T-cell (primary cell): ENCODE measurements at regions of chr14 and their contacts with region 1.

Region 1: GRCh38 chr14:91164685-91165084 is 50.8 kb downstream of the DGLUCY start:
- DNase-seq: no peak
- ATAC-seq: no peak
- H3K4me3 ChIP-seq: no peak overlapping the region
- H3K4me3 Mint-ChIP-seq: no peak overlapping the region
- H3K27ac ChIP-seq: no peak overlapping the region
- H3K27ac Mint-ChIP-seq: peak overlapping the region in 1 of 2 donors; percentile 53
- H3K4me1 ChIP-seq: no peaks in the 10 kb centered on the region
- H3K4me1 Mint-ChIP-seq: no peaks in the 10 kb centered on the region
- H3K27me3 ChIP-seq: no peaks in the 10 kb centered on the region
- H3K27me3 Mint-ChIP-seq: no peaks in the 10 kb centered on the region

Region 2: DNA sequence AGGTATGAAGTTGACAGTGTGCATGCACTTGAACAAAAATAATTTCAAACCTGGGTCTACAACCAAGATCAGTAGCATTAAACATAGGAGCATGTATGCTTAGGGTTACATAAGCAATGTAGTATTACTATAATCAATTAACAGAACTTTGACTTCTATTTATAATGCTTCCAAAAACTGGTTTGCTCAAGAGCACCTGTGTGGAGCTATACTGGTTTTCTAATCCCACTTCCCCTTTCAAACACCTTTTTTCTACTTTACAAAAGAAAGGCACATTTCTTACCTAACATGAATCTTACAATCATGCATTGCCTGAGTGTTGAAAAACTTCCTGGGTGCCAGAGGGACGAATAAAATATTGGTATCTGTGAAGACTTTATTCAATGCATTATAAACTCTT is 1282.8 kb before region 1 on chr14:
- CTCF ChIA-PET with region 1: no interaction called
- POLR2A ChIA-PET with region 1: no interaction called
- DNase-seq: no peak
- ATAC-seq: no peak
- H3K4me3 ChIP-seq: no peak overlapping the region
- H3K4me3 Mint-ChIP-seq: no peak overlapping the region
- H3K27ac ChIP-seq: no peak overlapping the region
- H3K27ac Mint-ChIP-seq: no peak overlapping the region
- H3K4me1 ChIP-seq: no peaks in the 10 kb centered on the region
- H3K4me1 Mint-ChIP-seq: no peaks in the 10 kb centered on the region
- H3K27me3 ChIP-seq: no peaks in the 10 kb centered on the region
- H3K27me3 Mint-ChIP-seq: no peaks in the 10 kb centered on the region

Region 3: DNA sequence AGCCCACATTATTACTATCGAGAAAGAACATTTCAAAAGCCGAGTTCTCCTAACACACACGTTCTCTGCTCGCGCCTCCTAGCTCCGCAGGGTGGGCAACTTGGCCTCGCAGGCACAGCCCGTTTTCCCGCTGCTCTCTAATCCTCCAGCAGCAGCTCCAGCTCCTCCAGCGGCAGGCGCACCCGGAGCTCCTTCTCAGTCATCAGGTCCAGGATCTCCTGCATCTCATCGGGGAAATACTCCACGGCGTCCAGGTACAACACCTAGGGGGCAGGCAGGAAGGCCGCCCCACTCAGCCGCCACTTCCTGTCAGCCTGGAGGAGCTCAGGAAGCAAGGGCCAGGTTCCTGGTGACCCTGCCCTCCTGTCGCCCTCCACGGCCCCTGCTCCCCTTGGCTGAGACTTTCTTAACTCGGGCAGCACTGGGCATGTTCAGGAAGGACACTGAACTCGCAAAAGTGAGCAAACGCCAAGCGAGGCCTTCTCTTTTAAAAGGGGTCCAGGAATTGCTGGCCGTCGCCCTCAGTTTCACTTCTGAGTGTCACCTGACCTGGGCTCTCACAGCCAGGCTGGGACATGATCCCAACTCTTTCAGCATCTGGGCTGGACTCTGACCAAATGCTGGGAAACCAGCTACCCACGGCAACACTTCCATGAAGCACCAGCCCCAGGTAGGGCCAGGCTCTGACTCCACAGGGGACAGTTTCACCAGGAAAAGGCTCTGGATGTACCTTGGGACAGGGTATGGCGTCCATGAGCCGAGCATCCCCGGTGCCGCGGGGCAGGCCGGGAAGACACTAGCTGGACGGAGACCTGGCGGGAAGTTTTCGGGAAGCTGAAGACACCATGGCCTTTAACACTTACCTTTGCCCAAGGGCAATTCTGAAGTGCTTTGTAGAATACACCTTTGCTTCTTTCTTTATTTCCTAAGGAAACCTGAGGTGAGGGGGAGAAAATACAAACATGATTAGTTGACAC is 886.2 kb before region 1 on chr14:
- CTCF ChIA-PET with region 1: no interaction called
- POLR2A ChIA-PET with region 1: interaction called in 1 of 2 experiments, 10 read pairs
- DNase-seq: no peak
- ATAC-seq: no peak
- H3K4me3 ChIP-seq: no peak overlapping the region
- H3K4me3 Mint-ChIP-seq: no peak overlapping the region
- H3K27ac ChIP-seq: no peak overlapping the region
- H3K27ac Mint-ChIP-seq: peak overlapping the region in 1 of 2 donors; percentile 72
- H3K4me1 ChIP-seq: peaks cover 0 to 7% of the 10 kb centered on the region in 2 experiments
- H3K4me1 Mint-ChIP-seq: peaks cover 13 to 17% (median 13%) of the 10 kb centered on the region in 3 donors
- H3K27me3 ChIP-seq: no peaks in the 10 kb centered on the region
- H3K27me3 Mint-ChIP-seq: no peaks in the 10 kb centered on the region